Calu3 (cell line): ENCODE measurements at regions of chr1 and their contacts with region 1.

Region 1: GRCh38 chr1:41416552-41417334 is 55.5 kb downstream of the FOXO6 start:
- DNase-seq: peak; percentile 86
- H3K4me3 Mint-ChIP-seq: no peak overlapping the region
- H3K27ac Mint-ChIP-seq: no peak overlapping the region
- H3K4me1 Mint-ChIP-seq: peaks cover 33% of the 10 kb centered on the region
- H3K27me3 Mint-ChIP-seq: peaks cover 22% of the 10 kb centered on the region
- CTCF ChIP-seq: peak; percentile 85

Region 2: GRCh38 chr1:41255978-41256377 is 160.8 kb before region 1 on chr1:
- CTCF ChIA-PET with region 1: no interaction called
- intact Hi-C with region 1: no loop called
- DNase-seq: no peak
- H3K4me3 Mint-ChIP-seq: no peak overlapping the region
- H3K27ac Mint-ChIP-seq: no peak overlapping the region
- H3K4me1 Mint-ChIP-seq: peaks cover 15% of the 10 kb centered on the region
- H3K27me3 Mint-ChIP-seq: peaks cover 15% of the 10 kb centered on the region
- CTCF ChIP-seq: no peak

Region 3: GRCh38 chr1:41268154-41268770 is 148.5 kb before region 1 on chr1:
- CTCF ChIA-PET with region 1: interaction called, 3 read pairs
- intact Hi-C with region 1: loop called (anchors 5 kb)
- DNase-seq: peak; percentile 85
- H3K4me3 Mint-ChIP-seq: no peak overlapping the region
- H3K27ac Mint-ChIP-seq: no peak overlapping the region
- H3K4me1 Mint-ChIP-seq: no peaks in the 10 kb centered on the region
- H3K27me3 Mint-ChIP-seq: peaks cover 16% of the 10 kb centered on the region
- CTCF ChIP-seq: peak; percentile 90

Region 4: DNA sequence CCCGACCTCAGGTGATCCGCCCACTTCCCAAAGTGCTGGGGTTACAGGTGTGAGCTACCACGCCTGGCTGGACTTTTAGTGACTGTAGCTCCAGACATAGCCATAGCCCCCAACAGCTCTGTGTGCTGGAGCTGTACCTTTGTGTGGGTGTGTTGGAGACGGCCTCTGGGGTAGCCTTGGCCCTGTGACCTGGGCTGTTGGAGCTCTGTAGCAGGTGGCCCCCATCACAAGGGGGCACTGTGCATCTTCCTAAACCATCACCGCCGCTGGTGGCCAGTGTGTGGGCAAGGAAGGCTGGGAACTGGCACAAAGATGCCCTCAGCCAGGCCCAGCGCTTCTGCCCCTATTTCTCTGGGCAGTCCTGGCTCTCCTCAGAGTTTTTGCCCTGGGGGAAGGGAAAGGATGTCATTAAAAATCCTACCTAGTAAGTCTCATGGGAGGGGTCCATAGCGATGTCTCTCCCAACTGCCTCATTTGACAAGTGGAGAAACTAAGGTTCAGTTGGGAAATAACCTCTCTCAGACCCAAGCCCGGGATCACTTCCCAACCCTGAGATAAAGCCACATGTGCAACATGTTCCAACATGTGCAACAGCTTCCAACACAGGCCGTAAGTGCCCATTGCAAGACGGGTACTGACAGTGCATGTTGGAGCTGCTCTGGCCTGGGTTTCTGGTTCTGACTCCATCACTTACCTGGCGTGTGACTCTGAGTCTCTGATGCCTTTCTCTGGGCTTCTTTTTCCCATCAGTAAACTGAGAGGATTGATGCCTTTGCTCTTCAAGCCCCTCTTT is 93.7 kb before region 1 on chr1:
- CTCF ChIA-PET with region 1: interaction called, 20 read pairs
- intact Hi-C with region 1: loop called (anchors 1 kb)
- DNase-seq: peak; percentile 77
- H3K4me3 Mint-ChIP-seq: no peak overlapping the region
- H3K27ac Mint-ChIP-seq: no peak overlapping the region
- H3K4me1 Mint-ChIP-seq: no peaks in the 10 kb centered on the region
- H3K27me3 Mint-ChIP-seq: peaks cover 16% of the 10 kb centered on the region
- CTCF ChIP-seq: peak; percentile 63